HEK293T (cell line): ENCODE measurements at regions of chr11 and their contacts with region 1.

Region 1: DNA sequence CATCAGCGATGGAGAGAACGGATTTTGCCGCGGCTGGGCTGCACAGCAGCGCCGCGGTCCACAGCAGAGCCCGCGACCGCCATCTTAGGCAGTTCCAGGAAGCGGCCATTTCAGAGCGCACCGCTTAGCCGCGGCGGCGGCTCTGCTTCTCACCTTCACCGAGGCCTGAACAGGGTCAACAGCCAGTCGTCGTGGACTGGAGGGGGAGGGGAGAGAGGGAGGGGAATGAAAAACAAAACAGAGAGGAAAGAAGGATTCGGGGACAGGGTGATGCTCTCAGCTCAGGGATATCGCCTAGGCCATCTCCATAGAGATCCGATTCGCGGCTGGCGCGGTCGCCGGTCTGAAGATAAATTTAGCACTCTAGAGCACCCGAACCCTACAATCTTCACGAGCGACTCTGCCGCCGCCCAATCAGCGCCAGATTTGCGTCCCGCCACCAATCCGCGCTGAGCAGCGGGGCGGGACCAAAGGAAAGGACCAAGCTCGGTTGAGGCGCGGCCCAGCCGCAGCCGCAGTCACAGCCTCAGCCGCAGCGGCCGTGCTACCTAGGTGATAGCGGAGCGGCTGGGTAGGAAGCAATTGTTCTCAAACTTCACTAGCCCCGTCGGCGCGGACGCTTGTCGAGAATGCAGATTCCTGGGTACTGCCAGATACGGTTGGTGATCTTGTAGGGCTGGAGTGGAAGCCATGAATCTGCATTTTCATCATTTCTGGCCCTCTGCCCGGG is at the start of gene ZBED5:
- DNase-seq: peak; percentile 92

Region 2: GRCh38 chr11:10899121-10899830 is 41.4 kb after region 1 on chr11:
- CTCF ChIA-PET with region 1: no interaction called
- POLR2A ChIA-PET with region 1: interaction called, 13 read pairs
- DNase-seq: no peak